ENCODE measurements at regions of chr16 and their contacts with region 1.

Region 1: GRCh38 chr16:12348733-12349704 is 372.5 kb downstream of the SNX29 start:
- DNase-seq: no peak
- H3K4me3 ChIP-seq: no peak overlapping the region
- H3K27ac ChIP-seq: no peak overlapping the region
- H3K4me1 ChIP-seq: no peaks in the 10 kb centered on the region
- H3K27me3 ChIP-seq: no peaks in the 10 kb centered on the region
- CTCF ChIP-seq: no peak
- POLR2A ChIP-seq: no peak

Region 2: DNA sequence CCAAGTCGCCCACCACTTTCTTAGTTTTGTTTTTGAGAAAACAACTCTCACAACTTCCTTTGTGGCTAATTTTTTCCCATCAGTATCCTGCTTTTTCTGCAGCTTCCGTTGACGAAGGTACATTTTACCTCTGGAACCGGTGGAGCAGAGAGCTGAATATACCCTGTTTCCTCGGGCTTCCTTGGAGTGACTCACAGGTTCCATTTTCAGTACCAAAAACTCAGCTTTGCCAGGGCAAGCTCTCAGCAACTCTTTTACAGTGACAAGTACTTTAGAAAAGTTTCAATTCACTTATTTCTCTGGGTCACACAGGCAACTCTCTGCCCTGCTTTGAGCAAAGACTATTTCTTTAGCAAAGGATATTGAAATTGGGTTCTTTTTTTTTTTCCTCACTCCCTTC is 53.6 kb before region 1 on chr16:
- intact Hi-C with region 1: loop called in 1 of 2 experiments (anchors 5 kb)
- DNase-seq: peak in 1 of 7 donors; percentile 50
- H3K4me3 ChIP-seq: no peak overlapping the region
- H3K27ac ChIP-seq: no peak overlapping the region
- H3K4me1 ChIP-seq: no peaks in the 10 kb centered on the region
- H3K27me3 ChIP-seq: no peaks in the 10 kb centered on the region
- CTCF ChIP-seq: no peak
- POLR2A ChIP-seq: no peak

Measured in adrenal gland (tissue), 19 donors.